CD4-positive, alpha-beta T cell (primary cell): ENCODE measurements at regions of chr15 and their contacts with region 1.

Region 1: DNA sequence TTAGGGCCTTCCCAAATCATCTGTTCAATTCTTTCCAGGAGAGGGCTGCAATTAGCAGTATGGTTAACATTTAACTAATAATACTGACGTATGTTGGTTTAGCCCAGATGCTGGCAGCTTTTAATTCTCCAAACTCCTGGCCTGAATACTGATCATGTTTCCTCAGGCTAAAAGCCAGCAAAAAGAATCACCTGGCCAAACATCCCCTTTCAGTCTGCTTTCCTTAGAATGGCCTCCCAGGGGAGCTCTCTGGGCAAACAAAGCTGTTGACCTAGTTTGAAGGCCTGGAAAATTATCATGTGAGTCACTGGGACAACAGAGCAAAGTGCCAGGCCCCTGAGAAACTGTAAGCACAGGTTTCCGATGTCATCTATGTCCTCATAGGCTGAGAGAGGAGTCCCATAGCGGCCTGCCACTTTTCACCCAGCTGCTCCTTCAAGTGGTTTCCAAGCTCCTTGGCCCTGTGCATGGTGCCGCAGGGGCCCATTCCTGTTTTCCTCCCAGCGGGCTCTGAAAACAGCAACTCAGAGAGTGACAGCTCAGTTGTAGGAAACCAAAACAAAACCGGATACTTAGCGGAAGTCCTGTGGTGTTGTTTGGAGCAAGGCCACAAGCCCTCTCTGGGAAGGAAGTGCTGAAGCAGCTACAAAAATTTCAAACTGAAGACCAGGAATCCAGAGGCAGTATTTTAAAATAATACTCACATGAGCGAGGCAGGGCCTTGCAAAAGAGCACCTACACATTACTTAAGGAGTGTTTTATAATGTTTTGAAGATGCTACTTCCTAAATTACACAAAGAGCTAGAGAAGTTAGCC is 36.5 kb upstream of the RAB11A start:
- DNase-seq: peak in 13 of 14 experiments; percentile 18 to 87 (median 45)
- ATAC-seq: peak; percentile 52
- H3K4me3 ChIP-seq: peak overlapping the region; percentile 2
- H3K4me3 Mint-ChIP-seq: peak overlapping the region; percentile 82
- H3K27ac ChIP-seq: peak overlapping the region; percentile 71 to 80
- H3K27ac Mint-ChIP-seq: peak overlapping the region; percentile 95
- H3K4me1 ChIP-seq: peaks cover 64% of the 10 kb centered on the region
- H3K4me1 Mint-ChIP-seq: peaks cover 59% of the 10 kb centered on the region
- H3K27me3 ChIP-seq: no peaks in the 10 kb centered on the region
- H3K27me3 Mint-ChIP-seq: no peaks in the 10 kb centered on the region
- CTCF ChIP-seq: no peak

Region 2: GRCh38 chr15:64355944-64356709 is 1476.6 kb before region 1 on chr15 and contains the start of gene CSNK1G1:
- CTCF ChIA-PET with region 1: no interaction called
- POLR2A ChIA-PET with region 1: no interaction called
- intact Hi-C with region 1: no loop called
- DNase-seq: peak; percentile 80 to 97 (median 89)
- ATAC-seq: peak; percentile 96
- H3K4me3 ChIP-seq: peak within 1 kb of the TSS; percentile 95
- H3K4me3 Mint-ChIP-seq: peak within 1 kb of the TSS; percentile 96
- H3K27ac ChIP-seq: peak within 1 kb of the TSS; percentile 49 to 55
- H3K27ac Mint-ChIP-seq: peak within 1 kb of the TSS; percentile 87
- H3K4me1 ChIP-seq: peaks cover 16% of the 10 kb centered on the region
- H3K4me1 Mint-ChIP-seq: peaks cover 22% of the 10 kb centered on the region
- H3K27me3 ChIP-seq: no peaks in the 10 kb centered on the region
- H3K27me3 Mint-ChIP-seq: no peaks in the 10 kb centered on the region
- CTCF ChIP-seq: peak; percentile 34
- total RNA-seq, gene CSNK1G1: 12.2 to 13.7 TPM

Region 3: GRCh38 chr15:65743637-65744252 is 89.0 kb before region 1 on chr15:
- CTCF ChIA-PET with region 1: interaction called, 3 read pairs
- POLR2A ChIA-PET with region 1: no interaction called
- intact Hi-C with region 1: loop called in 1 of 2 experiments (anchors 5 kb)
- DNase-seq: no peak
- ATAC-seq: no peak
- H3K4me3 ChIP-seq: no peak overlapping the region
- H3K4me3 Mint-ChIP-seq: no peak overlapping the region
- H3K27ac ChIP-seq: no peak overlapping the region
- H3K27ac Mint-ChIP-seq: no peak overlapping the region
- H3K4me1 ChIP-seq: no peaks in the 10 kb centered on the region
- H3K4me1 Mint-ChIP-seq: peaks cover 11% of the 10 kb centered on the region
- H3K27me3 ChIP-seq: no peaks in the 10 kb centered on the region
- H3K27me3 Mint-ChIP-seq: no peaks in the 10 kb centered on the region
- CTCF ChIP-seq: no peak

Region 4: DNA sequence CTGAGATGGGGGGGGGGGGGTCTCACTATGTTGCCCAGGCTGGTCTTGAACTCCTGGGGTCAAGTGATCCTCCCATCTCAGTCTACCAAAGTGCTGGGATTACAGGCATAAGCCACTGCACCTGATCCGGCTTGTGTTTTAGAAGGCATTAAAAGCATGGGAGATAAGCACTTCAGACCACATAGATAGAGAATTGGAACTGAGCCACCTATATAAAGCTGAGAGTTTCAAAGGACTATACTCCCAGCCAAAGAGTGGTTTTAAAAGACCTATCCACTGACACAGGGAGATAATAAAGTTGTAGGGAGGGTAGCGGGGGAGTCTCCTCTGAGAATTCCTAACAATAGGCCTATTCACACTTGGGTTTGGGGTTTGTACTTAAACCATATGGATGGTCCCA is 75.5 kb before region 1 on chr15:
- CTCF ChIA-PET with region 1: interaction called, 5 read pairs
- POLR2A ChIA-PET with region 1: no interaction called
- intact Hi-C with region 1: loop called in 1 of 2 experiments (anchors 5 kb)
- DNase-seq: no peak
- ATAC-seq: no peak
- H3K4me3 ChIP-seq: no peak overlapping the region
- H3K4me3 Mint-ChIP-seq: no peak overlapping the region
- H3K27ac ChIP-seq: no peak overlapping the region
- H3K27ac Mint-ChIP-seq: no peak overlapping the region
- H3K4me1 ChIP-seq: peaks cover 5% of the 10 kb centered on the region
- H3K4me1 Mint-ChIP-seq: peaks cover 18% of the 10 kb centered on the region
- H3K27me3 ChIP-seq: no peaks in the 10 kb centered on the region
- H3K27me3 Mint-ChIP-seq: no peaks in the 10 kb centered on the region
- CTCF ChIP-seq: no peak

Region 5: DNA sequence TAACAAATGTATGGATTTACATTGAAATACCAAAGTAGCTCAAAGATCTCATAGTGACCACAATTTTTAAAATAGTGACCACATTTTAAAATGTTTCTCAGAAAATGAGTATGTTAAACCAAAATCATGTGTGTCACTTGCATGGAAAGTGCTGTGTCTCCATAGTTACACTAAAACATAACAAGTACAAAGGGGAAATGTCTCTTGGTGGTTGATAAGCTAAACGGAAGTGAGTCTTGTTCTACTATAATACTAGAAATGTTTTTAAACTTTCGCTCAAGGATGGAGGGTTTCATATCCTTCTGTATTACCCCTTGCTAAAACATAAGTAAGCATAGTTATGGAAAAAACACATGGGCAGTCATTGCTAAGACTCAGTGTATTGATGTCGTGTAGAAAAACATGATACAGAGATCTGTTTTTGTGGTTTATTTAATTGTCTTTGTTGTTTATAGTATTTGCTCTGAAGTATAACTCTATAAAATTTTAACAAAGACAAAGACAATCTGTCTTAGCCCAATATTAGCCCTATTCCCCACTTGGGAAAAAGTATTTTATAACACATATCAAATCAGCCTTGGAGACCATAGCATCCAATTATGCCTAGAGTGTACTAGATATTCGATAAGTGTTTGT is 13.7 kb before region 1 on chr15:
- CTCF ChIA-PET with region 1: interaction called, 14 read pairs
- POLR2A ChIA-PET with region 1: interaction called, 27 read pairs
- intact Hi-C with region 1: loop called in 1 of 2 experiments (anchors 1 kb)
- DNase-seq: peak in 3 of 14 experiments; percentile 89 to 95 (median 92)
- ATAC-seq: peak; percentile 90
- H3K4me3 ChIP-seq: no peak overlapping the region
- H3K4me3 Mint-ChIP-seq: peak overlapping the region; percentile 59
- H3K27ac ChIP-seq: peak overlapping the region; percentile 82 to 94
- H3K27ac Mint-ChIP-seq: peak overlapping the region; percentile 94
- H3K4me1 ChIP-seq: peaks cover 51% of the 10 kb centered on the region
- H3K4me1 Mint-ChIP-seq: peaks cover 60% of the 10 kb centered on the region
- H3K27me3 ChIP-seq: no peaks in the 10 kb centered on the region
- H3K27me3 Mint-ChIP-seq: no peaks in the 10 kb centered on the region
- CTCF ChIP-seq: no peak

Region 6: GRCh38 chr15:65856821-65857455 is 24.2 kb after region 1 on chr15:
- CTCF ChIA-PET with region 1: interaction called, 7 read pairs
- POLR2A ChIA-PET with region 1: interaction called, 3 read pairs
- intact Hi-C with region 1: loop called in 1 of 2 experiments (anchors 2 kb)
- DNase-seq: peak; percentile 73 to 91 (median 80)
- ATAC-seq: peak; percentile 94
- H3K4me3 ChIP-seq: no peak overlapping the region
- H3K4me3 Mint-ChIP-seq: no peak overlapping the region
- H3K27ac ChIP-seq: no peak overlapping the region
- H3K27ac Mint-ChIP-seq: no peak overlapping the region
- H3K4me1 ChIP-seq: no peaks in the 10 kb centered on the region
- H3K4me1 Mint-ChIP-seq: peaks cover 6% of the 10 kb centered on the region
- H3K27me3 ChIP-seq: no peaks in the 10 kb centered on the region
- H3K27me3 Mint-ChIP-seq: no peaks in the 10 kb centered on the region
- CTCF ChIP-seq: peak; percentile 92